ENCODE measurements at regions of chr7 and their contacts with region 1.

Region 1: GRCh38 chr7:92447345-92448204 is at the start of gene GATAD1:
- DNase-seq: peak; percentile 81
- H3K4me3 ChIP-seq: peak within 1 kb of the TSS; percentile 84
- H3K27ac ChIP-seq: peak within 1 kb of the TSS; percentile 69
- H3K27me3 ChIP-seq: no peaks in the 10 kb centered on the region
- CTCF ChIP-seq: peak; percentile 89
- polyA plus RNA-seq, gene GATAD1: 26.9 and 31.7 TPM in 2 replicates

Region 2: DNA sequence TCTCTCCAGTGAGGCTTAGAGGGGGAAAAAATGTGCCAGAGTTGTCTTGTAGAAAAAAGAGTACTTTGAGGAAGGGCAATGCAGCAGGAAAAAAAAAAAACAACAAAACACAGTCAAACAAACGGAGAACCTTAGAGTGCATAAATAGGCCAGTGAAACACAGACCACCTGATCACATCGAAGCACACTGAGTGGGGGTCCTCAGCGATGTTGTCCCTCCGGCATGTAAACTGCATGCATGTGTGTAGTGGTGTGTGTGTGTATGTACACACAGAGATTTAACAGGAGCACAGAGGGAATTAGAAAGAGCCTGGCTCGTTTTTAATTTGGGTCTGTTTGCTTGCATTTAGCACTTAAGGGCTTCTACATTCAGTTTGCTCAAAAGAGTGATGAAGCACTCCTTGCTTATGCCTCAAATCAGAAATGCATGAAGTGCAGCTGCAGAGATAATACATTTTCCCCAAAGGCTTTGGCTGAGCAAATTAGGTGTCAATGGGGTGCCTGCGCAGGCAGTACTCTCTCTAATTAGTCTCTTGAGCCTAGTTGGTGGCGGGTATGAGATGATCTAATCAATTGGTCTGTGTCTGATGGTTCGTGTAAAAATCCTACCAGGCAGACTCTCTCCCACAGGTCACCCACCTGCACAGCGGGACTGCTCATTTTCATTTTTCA is 1246.0 kb before region 1 on chr7:
- CTCF ChIA-PET with region 1: no interaction called
- POLR2A ChIA-PET with region 1: no interaction called
- DNase-seq: no peak
- H3K4me3 ChIP-seq: no peak overlapping the region
- H3K27ac ChIP-seq: no peak overlapping the region
- H3K27me3 ChIP-seq: no peaks in the 10 kb centered on the region
- CTCF ChIP-seq: no peak

Region 3: GRCh38 chr7:91880413-91881241 is 566.9 kb before region 1 on chr7 and contains the start of gene MTERF1:
- CTCF ChIA-PET with region 1: interaction called, 11 read pairs
- POLR2A ChIA-PET with region 1: no interaction called
- DNase-seq: peak; percentile 83
- H3K4me3 ChIP-seq: peak within 1 kb of the TSS; percentile 92
- H3K27ac ChIP-seq: peak within 1 kb of the TSS; percentile 12
- H3K27me3 ChIP-seq: no peaks in the 10 kb centered on the region
- CTCF ChIP-seq: peak; percentile 99
- polyA plus RNA-seq, gene MTERF1: 11.1 and 18.3 TPM in 2 replicates

Region 4: GRCh38 chr7:92178927-92179924 is 268.3 kb before region 1 on chr7 and contains the start of gene LRRD1:
- CTCF ChIA-PET with region 1: interaction called, 14 read pairs
- POLR2A ChIA-PET with region 1: interaction called, 3 read pairs
- DNase-seq: peak; percentile 44
- H3K4me3 ChIP-seq: peak within 1 kb of the TSS; percentile 57
- H3K27ac ChIP-seq: peak within 1 kb of the TSS; percentile 41
- H3K27me3 ChIP-seq: no peaks in the 10 kb centered on the region
- CTCF ChIP-seq: peak; percentile 95
- polyA plus RNA-seq, gene LRRD1: not detected in 2 replicates

Region 5: GRCh38 chr7:92421676-92422435 is 25.7 kb before region 1 on chr7:
- CTCF ChIA-PET with region 1: interaction called, 101 read pairs
- POLR2A ChIA-PET with region 1: no interaction called
- DNase-seq: no peak
- H3K4me3 ChIP-seq: no peak overlapping the region
- H3K27ac ChIP-seq: no peak overlapping the region
- H3K27me3 ChIP-seq: peaks cover 4% of the 10 kb centered on the region
- CTCF ChIP-seq: no peak

Region 6: DNA sequence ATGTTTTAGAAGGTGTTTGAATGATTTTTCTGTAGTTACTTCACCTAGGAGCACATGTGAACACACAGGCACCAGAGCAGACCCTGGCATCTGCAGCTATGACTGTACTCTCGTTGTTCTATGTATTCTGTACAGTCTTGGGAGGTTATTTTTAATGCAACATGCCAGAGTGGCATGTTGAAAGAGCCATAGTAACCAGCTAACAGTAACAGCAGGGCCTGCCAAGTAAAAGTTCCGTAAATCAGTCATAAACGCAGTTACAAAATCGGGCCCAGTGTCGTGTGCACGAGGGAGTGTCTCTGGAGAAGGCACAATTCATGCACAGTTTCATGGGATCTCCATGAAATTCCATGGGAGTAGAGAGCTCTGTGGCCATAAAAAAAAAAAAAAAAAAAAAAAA is 497.1 kb after region 1 on chr7:
- CTCF ChIA-PET with region 1: no interaction called
- POLR2A ChIA-PET with region 1: no interaction called
- DNase-seq: no peak
- H3K4me3 ChIP-seq: no peak overlapping the region
- H3K27ac ChIP-seq: no peak overlapping the region
- H3K27me3 ChIP-seq: no peaks in the 10 kb centered on the region
- CTCF ChIP-seq: no peak

Measured in AG04450 (cell line).